Posterior vena cava (tissue), 2 donors: ENCODE measurements at regions of chr13 and their contacts with region 1.

Region 1: GRCh38 chr13:108289819-108290218 is 20.3 kb downstream of the TNFSF13B start:
- DNase-seq: no peak

Region 2: DNA sequence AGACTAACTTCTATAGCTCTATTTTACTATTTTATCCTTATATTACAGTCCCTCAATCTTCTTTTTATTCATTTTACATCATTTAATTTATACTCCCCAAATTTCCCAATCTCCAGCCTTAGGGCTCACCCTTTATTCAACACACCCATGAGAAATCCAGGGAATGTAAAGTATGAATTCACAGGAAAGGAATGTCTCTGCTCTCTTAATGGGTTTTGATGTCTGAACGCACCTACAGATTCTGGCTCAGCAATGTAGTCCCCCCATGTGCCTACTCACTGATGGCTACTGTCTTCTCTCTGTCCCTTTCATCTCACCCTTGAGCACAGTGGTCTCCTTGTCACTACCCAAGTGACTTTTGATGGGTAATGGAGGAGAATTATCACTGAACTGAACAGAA is 12.5 kb after region 1 on chr13:
- intact Hi-C with region 1: loop called in 1 of 2 experiments (anchors 1 kb)
- DNase-seq: no peak

Region 3: DNA sequence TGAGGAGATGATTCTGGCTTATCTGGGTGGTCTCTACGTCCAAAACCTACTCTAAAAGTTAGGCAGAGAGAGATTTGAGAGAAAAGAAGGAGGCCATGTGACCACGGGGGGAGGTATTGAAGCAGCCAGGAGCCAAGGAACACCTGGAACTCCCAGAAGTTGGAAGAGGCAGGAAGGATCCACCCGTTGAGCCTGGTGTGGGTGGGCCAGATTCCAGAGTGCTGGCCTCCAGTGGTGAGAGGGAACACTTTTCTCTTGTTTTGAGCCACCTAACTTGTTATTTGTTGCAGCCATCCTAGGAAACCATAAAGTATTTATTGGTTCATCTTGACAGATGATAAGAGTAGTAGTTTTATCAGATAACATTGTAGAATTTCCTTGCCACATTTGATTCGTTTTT is 736.4 kb after region 1 on chr13:
- intact Hi-C with region 1: no loop called
- DNase-seq: no peak